Tibial artery (tissue), 4 donors: ENCODE measurements at regions of chr14 and their contacts with region 1.

Region 1: GRCh38 chr14:55411426-55412389 is at the start of gene ATG14:
- DNase-seq: peak; percentile 86 to 92
- H3K4me3 ChIP-seq: peak within 1 kb of the TSS; percentile 78 to 83
- H3K27ac ChIP-seq: peak within 1 kb of the TSS; percentile 87 to 90
- H3K4me1 ChIP-seq: peaks cover 0 to 49% (median 31%) of the 10 kb centered on the region in 4 donors
- H3K27me3 ChIP-seq: no peaks in the 10 kb centered on the region
- CTCF ChIP-seq: peak in 1 of 2 experiments; percentile 22

Region 2: GRCh38 chr14:55270832-55271565 is 140.7 kb before region 1 on chr14 and contains the start of gene FBXO34:
- intact Hi-C with region 1: loop called (anchors 10 kb)
- DNase-seq: peak; percentile 99
- H3K4me3 ChIP-seq: peak within 1 kb of the TSS; percentile 84 to 99
- H3K27ac ChIP-seq: peak within 1 kb of the TSS; percentile 88
- H3K4me1 ChIP-seq: peaks cover 0 to 47% (median 12%) of the 10 kb centered on the region in 4 donors
- H3K27me3 ChIP-seq: no peaks in the 10 kb centered on the region
- CTCF ChIP-seq: peak; percentile 99